Transverse colon (tissue), 4 donors: ENCODE measurements at regions of chr3 and their contacts with region 1.

Region 1: DNA sequence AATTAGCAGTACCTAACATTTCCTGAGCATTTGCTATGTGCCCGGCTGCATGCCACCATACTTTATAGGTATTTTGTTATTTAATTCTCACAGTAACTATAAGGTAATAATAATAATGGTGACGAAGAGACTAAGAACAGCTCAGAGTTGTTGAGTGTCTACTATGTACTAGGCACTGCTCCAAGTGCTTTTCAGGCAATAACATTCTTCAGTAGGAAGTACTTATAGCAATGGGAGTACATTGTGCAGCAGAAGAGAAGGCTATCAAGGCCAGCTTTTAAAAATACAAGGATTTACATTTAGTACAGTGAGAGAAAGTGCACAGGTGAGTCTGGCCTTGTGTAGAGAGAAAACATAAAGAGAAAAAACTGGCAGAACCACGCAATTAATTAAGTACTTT is 647.4 kb downstream of the FHIT start:
- DNase-seq: no peak
- H3K4me3 ChIP-seq: no peak overlapping the region
- H3K27ac ChIP-seq: no peak overlapping the region
- H3K4me1 ChIP-seq: no peaks in the 10 kb centered on the region
- H3K27me3 ChIP-seq: no peaks in the 10 kb centered on the region
- CTCF ChIP-seq: no peak
- EP300 ChIP-seq: no peak
- POLR2A ChIP-seq: no peak

Region 2: DNA sequence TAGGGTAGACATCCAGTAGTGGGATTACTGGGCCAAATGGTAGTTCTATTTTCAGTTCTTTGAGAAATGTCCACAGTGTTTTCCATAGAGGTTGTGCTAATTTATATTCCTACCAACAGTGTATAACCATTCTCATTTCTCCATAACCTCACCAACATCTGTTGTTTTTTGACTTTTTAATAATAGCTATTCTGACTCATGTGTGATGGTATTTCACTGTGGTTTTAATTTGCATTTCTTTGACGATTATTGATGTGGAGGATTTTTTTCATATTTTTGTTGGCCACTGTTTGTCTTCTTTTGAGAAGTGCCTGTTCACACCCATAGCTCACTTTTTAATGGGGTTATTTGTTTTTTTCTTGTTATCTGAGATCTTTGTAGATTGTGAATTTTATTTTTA is 1679.3 kb before region 1 on chr3:
- in situ Hi-C with region 1: no loop called
- intact Hi-C with region 1: loop called (anchors 5 kb)
- DNase-seq: no peak
- H3K4me3 ChIP-seq: no peak overlapping the region
- H3K27ac ChIP-seq: no peak overlapping the region
- H3K4me1 ChIP-seq: no peaks in the 10 kb centered on the region
- H3K27me3 ChIP-seq: no peaks in the 10 kb centered on the region
- CTCF ChIP-seq: no peak
- EP300 ChIP-seq: no peak
- POLR2A ChIP-seq: no peak